Heart left ventricle (tissue), 16 donors: ENCODE measurements at regions of chr20 and their contacts with region 1.

Region 1: GRCh38 chr20:39264506-39265172 is 302.5 kb downstream of the DHX35 start:
- DNase-seq: peak in 4 of 5 donors; percentile 56 to 69 (median 64)
- ATAC-seq: peak; percentile 39 to 82 (median 58)
- H3K4me3 ChIP-seq: no peak overlapping the region
- H3K27ac ChIP-seq: no peak overlapping the region
- H3K4me1 ChIP-seq: peaks cover 0 to 17% (median 3%) of the 10 kb centered on the region in 12 donors
- H3K27me3 ChIP-seq: peaks cover 0 to 8% (median 0%) of the 10 kb centered on the region in 9 donors
- CTCF ChIP-seq: peak; percentile 69 to 89 (median 84)
- POLR2A ChIP-seq: no peak

Region 2: GRCh38 chr20:38745757-38746156 is 518.9 kb before region 1 on chr20:
- intact Hi-C with region 1: no loop called
- DNase-seq: no peak
- ATAC-seq: no peak
- H3K4me3 ChIP-seq: no peak overlapping the region
- H3K27ac ChIP-seq: no peak overlapping the region
- H3K4me1 ChIP-seq: peaks cover 4 to 17% (median 13%) of the 10 kb centered on the region in 12 donors
- H3K27me3 ChIP-seq: peaks cover 0 to 28% (median 6%) of the 10 kb centered on the region in 9 donors
- CTCF ChIP-seq: no peak
- POLR2A ChIP-seq: no peak

Region 3: DNA sequence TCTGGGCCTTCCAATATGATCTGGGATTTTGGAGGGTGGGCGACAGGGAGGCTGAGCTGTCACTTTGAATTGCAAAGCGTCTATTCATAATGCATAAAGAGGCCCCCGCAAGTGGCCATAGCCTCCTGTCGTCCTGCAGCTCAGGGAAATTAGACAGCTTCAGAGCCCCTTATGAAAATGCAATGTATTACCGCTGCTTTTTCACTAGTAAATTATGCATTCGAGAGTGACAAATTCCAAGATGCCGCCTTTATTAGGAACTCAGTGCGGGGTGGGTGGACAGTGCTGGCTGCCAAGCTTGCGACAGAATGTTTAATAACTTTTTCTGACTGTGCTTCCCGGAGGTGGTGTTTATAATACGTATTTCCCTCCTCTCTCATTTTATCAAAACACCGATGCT is 134.0 kb before region 1 on chr20:
- intact Hi-C with region 1: no loop called
- DNase-seq: no peak
- ATAC-seq: no peak
- H3K4me3 ChIP-seq: no peak overlapping the region
- H3K27ac ChIP-seq: no peak overlapping the region
- H3K4me1 ChIP-seq: no peaks in the 10 kb centered on the region
- H3K27me3 ChIP-seq: peaks cover 0 to 6% (median 0%) of the 10 kb centered on the region in 9 donors
- CTCF ChIP-seq: no peak
- POLR2A ChIP-seq: no peak

Region 4: GRCh38 chr20:39429716-39430115 is 165.1 kb after region 1 on chr20:
- intact Hi-C with region 1: loop called in 4 of 10 experiments (anchors 5 to 10 kb)
- DNase-seq: no peak
- ATAC-seq: peak in 2 of 4 donors; percentile 38 to 60
- H3K4me3 ChIP-seq: no peak overlapping the region
- H3K27ac ChIP-seq: no peak overlapping the region
- H3K4me1 ChIP-seq: no peaks in the 10 kb centered on the region
- H3K27me3 ChIP-seq: no peaks in the 10 kb centered on the region
- CTCF ChIP-seq: peak in 8 of 12 donors; percentile 11 to 56 (median 35)
- POLR2A ChIP-seq: no peak

Region 5: GRCh38 chr20:39874049-39874888 is 609.6 kb after region 1 on chr20:
- intact Hi-C with region 1: loop called (anchors 1 to 5 kb)
- DNase-seq: peak; percentile 73 to 84 (median 79)
- ATAC-seq: peak; percentile 90 to 98 (median 93)
- H3K4me3 ChIP-seq: no peak overlapping the region
- H3K27ac ChIP-seq: peak overlapping the region in 1 of 12 donors; percentile 36
- H3K4me1 ChIP-seq: peaks cover 0 to 14% (median 0%) of the 10 kb centered on the region in 12 donors
- H3K27me3 ChIP-seq: peaks cover 0 to 19% (median 0%) of the 10 kb centered on the region in 9 donors
- CTCF ChIP-seq: peak; percentile 67 to 92 (median 84)
- POLR2A ChIP-seq: no peak

Region 6: DNA sequence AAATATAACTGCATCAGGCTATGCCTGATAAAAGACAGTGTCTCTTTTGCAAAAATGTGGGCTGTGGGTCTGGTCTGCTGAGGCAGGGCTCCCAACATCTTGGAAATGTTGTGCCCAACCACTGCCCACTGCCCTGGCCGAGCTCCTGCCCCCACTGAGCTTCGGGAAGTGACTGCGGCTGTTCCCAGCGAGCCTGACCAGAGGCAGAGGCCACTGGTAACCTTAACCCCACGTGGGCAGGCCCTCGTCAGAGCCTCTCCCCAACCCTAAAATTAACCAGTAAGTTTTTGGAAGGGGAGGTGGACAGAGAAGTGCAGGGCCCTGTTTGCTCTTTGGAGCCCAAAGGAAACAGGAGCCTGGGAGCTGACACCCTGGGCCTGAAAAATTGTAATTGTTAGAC is 1198.5 kb after region 1 on chr20:
- intact Hi-C with region 1: loop called in 1 of 10 experiments (anchors 5 kb)
- DNase-seq: peak in 1 of 5 donors; percentile 34
- ATAC-seq: peak in 2 of 4 donors; percentile 46 to 49
- H3K4me3 ChIP-seq: no peak overlapping the region
- H3K27ac ChIP-seq: peak overlapping the region in 1 of 12 donors; percentile 84
- H3K4me1 ChIP-seq: peaks cover 0 to 40% (median 0%) of the 10 kb centered on the region in 12 donors
- H3K27me3 ChIP-seq: no peaks in the 10 kb centered on the region
- CTCF ChIP-seq: no peak
- POLR2A ChIP-seq: no peak

Region 7: GRCh38 chr20:40945754-40946450 is 1681.3 kb after region 1 on chr20:
- intact Hi-C with region 1: loop called in 1 of 10 experiments (anchors 10 kb)
- DNase-seq: peak in 3 of 5 donors; percentile 58 to 66 (median 60)
- ATAC-seq: peak; percentile 73 to 93 (median 86)
- H3K4me3 ChIP-seq: no peak overlapping the region
- H3K27ac ChIP-seq: no peak overlapping the region
- H3K4me1 ChIP-seq: no peaks in the 10 kb centered on the region
- H3K27me3 ChIP-seq: peaks cover 0 to 21% (median 0%) of the 10 kb centered on the region in 9 donors
- CTCF ChIP-seq: peak in 11 of 12 donors; percentile 38 to 71 (median 60)
- POLR2A ChIP-seq: no peak